ENCODE measurements at regions of chrX and their contacts with region 1.

Region 1: GRCh38 chrX:10189317-10190268 is 32.8 kb downstream of the CLCN4 start:
- DNase-seq: peak in 2 of 3 donors; percentile 65 to 76
- ATAC-seq: peak; percentile 91
- H3K4me3 ChIP-seq: no peak overlapping the region
- H3K4me1 ChIP-seq: no peaks in the 10 kb centered on the region
- CTCF ChIP-seq: peak; percentile 21

Region 2: GRCh38 chrX:10636337-10636736 is 446.7 kb after region 1 on chrX:
- intact Hi-C with region 1: loop called (anchors 10 kb)
- DNase-seq: peak in 1 of 3 donors; percentile 32
- ATAC-seq: peak; percentile 52
- H3K4me3 ChIP-seq: no peak overlapping the region
- H3K4me1 ChIP-seq: no peaks in the 10 kb centered on the region
- CTCF ChIP-seq: no peak

Region 3: DNA sequence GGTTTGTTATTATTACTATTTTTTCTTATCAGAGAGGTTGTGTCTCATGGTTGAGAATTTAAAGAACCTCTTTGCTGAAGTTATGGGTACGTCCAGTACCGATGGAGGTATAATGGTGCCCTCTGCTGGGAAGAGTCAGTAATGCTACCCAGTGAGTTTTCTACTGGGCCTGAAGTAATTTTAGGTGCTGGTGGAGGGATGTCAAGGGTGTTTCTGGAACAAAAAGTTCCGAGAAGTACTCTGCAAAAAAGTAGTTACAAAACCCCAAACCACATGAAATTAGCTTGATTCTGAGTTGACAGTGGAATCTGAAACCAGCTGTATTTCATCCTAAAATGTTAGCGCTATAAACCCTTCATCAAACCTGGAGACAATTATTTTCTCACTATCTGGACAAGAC is 533.3 kb after region 1 on chrX:
- intact Hi-C with region 1: loop called in 1 of 2 experiments (anchors 10 kb)
- DNase-seq: peak in 1 of 3 donors; percentile 74
- ATAC-seq: peak; percentile 70
- H3K4me3 ChIP-seq: no peak overlapping the region
- H3K4me1 ChIP-seq: no peaks in the 10 kb centered on the region
- CTCF ChIP-seq: no peak

Region 4: GRCh38 chrX:11100281-11101035 is 910.9 kb after region 1 on chrX:
- intact Hi-C with region 1: loop called in 1 of 2 experiments (anchors 10 kb)
- DNase-seq: peak in 1 of 3 donors; percentile 60
- ATAC-seq: peak; percentile 86
- H3K4me3 ChIP-seq: no peak overlapping the region
- H3K4me1 ChIP-seq: no peaks in the 10 kb centered on the region
- CTCF ChIP-seq: peak; percentile 12